ENCODE measurements at regions of chr13 and their contacts with region 1.

Region 1: DNA sequence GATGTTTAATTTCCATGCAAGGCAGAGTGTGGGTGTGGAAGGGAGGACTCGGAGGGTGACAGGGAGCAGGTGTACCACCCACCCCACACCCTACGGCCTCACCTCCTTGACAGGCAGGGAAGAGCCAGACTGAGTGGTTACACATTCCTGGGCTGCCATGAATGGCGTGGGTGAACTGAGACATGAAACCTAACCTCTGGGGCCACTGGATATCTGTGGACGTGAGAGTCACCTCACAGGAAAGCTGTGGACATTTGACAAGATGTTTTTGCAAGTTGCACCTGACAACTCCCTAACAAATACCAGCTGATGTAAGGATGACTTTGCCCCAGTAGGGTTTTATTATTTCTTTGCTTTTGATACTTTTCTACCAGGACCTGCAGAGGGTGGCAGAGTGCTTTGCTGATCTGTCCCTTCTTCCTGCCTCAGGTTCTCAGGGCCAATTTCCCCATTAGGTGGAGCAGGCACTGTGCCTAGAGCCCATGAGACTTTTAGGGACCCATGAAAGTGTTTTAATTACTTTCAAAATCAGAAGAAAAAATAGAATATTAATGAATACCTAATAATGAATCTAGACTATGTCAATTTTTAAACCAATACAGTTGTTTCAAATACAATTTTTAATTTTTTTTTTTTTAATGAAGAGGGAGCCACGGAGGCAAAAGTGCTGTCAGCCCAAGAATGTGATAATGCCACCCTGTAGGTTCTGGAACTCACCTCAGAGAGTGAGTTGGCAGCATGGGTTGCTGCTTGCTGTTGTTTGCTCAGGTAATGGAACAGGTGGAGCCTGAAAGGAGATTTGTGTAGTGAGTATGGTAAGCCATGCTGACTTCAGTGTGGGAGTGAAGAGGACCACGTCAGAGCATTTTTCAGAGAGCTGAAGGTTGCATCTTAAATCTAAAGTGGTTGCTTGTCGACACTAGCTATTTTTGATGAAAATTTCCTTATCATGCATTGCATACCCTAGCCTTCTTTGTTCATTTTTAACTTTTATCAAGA is 58.0 kb upstream of the CYSLTR2 start:
- DNase-seq: no peak

Region 2: DNA sequence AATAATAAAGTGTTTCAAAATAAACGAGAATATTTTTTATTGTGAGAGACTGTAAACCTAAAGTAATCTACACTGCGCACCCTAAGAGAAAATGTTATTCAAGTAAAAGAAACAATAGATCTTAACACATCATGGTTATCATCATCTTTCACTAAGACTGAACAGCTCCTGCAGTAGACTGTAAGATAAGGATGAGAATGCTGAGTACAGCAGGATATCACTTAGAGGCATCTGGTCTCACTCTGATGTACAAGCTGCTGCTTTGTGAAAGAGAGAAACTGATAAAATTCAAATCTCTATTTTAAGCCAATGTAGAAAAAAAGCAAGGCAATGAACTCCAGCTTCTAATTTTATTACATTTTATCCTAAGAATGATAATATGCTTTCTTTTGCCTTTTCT is 1437.1 kb before region 1 on chr13:
- intact Hi-C with region 1: no loop called
- DNase-seq: no peak

Region 3: GRCh38 chr13:48334534-48335127 is 261.1 kb before region 1 on chr13:
- intact Hi-C with region 1: no loop called
- DNase-seq: no peak

Region 4: GRCh38 chr13:48749699-48750473 is 154.2 kb after region 1 on chr13:
- intact Hi-C with region 1: loop called in 1 of 2 experiments (anchors 5 kb)
- DNase-seq: peak; percentile 95

Region 5: DNA sequence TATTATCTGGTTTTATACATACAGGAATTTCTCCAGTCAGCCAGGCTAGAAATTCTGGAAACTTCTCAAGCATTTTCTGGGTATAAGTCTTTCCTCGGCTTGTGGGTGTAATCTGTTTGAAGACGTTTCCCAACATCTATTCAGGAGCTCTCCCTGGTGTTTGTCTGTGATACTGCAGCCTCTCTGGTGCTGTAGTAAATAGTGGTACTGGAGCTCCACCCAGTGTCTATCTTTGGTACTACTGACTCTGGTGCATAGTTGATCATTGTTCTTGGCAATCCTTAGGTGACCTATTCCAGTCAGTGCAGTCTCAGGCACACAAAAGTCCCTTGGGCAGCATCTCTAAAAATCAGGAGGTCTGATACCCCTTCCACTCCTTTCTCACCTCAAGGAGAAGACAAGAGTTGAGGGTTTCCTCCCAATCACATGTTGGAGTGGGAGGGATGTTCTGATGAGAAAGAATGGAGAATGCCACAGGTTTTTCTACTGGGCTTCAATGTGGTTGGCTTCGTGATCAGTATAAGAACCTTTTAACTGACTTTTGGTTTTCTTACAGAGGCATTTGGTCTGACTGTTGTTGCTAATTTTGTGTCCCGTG is 173.5 kb after region 1 on chr13:
- intact Hi-C with region 1: loop called (anchors 5 to 10 kb)
- DNase-seq: no peak

Region 6: DNA sequence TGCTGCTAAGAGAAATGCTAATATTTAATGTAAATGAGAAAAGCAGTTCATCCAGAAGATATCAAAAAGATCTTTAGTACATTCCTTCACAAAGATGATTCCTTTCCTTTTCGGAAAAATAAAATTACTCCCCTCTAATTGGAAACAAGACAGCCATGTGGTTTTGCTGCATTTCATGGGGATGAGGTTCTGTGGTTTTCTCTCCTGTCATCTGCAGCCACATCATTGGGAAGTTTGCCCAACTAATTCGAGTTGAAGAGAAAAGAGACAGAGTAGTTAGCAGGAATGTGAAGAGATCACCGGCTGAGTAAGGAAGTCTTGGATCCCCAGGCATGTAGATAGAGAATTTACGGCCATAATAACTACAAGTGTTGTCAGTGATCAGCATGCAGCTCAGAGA is 180.1 kb after region 1 on chr13:
- intact Hi-C with region 1: loop called in 1 of 2 experiments (anchors 10 kb)
- DNase-seq: no peak